Heart right ventricle (tissue), 16 donors: ENCODE measurements at regions of chr3 and their contacts with region 1.

Region 1: GRCh38 chr3:111080413-111080812 is 8.8 kb downstream of the NECTIN3 start:
- DNase-seq: no peak
- ATAC-seq: no peak
- H3K4me3 ChIP-seq: no peak overlapping the region
- H3K27ac ChIP-seq: no peak overlapping the region
- H3K4me1 ChIP-seq: peaks cover 0 to 12% (median 0%) of the 10 kb centered on the region in 9 donors
- H3K27me3 ChIP-seq: no peaks in the 10 kb centered on the region
- CTCF ChIP-seq: peak in 8 of 9 donors; percentile 27 to 75 (median 57)

Region 2: GRCh38 chr3:110314512-110315114 is 765.8 kb before region 1 on chr3:
- intact Hi-C with region 1: loop called in 2 of 10 experiments (anchors 10 kb)
- DNase-seq: peak in 1 of 2 donors; percentile 35
- ATAC-seq: peak in 2 of 8 donors; percentile 34 to 73
- H3K4me3 ChIP-seq: no peak overlapping the region
- H3K27ac ChIP-seq: no peak overlapping the region
- H3K4me1 ChIP-seq: peaks cover 0 to 5% (median 0%) of the 10 kb centered on the region in 9 donors
- H3K27me3 ChIP-seq: no peaks in the 10 kb centered on the region
- CTCF ChIP-seq: peak; percentile 51 to 78 (median 71)

Region 3: GRCh38 chr3:111045564-111045963 is 34.8 kb before region 1 on chr3:
- intact Hi-C with region 1: no loop called
- DNase-seq: no peak
- ATAC-seq: no peak
- H3K4me3 ChIP-seq: no peak overlapping the region
- H3K27ac ChIP-seq: no peak overlapping the region
- H3K4me1 ChIP-seq: no peaks in the 10 kb centered on the region
- H3K27me3 ChIP-seq: no peaks in the 10 kb centered on the region
- CTCF ChIP-seq: no peak

Region 4: GRCh38 chr3:111414531-111414930 is 334.1 kb after region 1 on chr3:
- intact Hi-C with region 1: no loop called
- DNase-seq: no peak
- ATAC-seq: no peak
- H3K4me3 ChIP-seq: no peak overlapping the region
- H3K27ac ChIP-seq: no peak overlapping the region
- H3K4me1 ChIP-seq: no peaks in the 10 kb centered on the region
- H3K27me3 ChIP-seq: no peaks in the 10 kb centered on the region
- CTCF ChIP-seq: no peak